Caco-2 (cell line): ENCODE measurements at regions of chr2 and their contacts with region 1.

Region 1: DNA sequence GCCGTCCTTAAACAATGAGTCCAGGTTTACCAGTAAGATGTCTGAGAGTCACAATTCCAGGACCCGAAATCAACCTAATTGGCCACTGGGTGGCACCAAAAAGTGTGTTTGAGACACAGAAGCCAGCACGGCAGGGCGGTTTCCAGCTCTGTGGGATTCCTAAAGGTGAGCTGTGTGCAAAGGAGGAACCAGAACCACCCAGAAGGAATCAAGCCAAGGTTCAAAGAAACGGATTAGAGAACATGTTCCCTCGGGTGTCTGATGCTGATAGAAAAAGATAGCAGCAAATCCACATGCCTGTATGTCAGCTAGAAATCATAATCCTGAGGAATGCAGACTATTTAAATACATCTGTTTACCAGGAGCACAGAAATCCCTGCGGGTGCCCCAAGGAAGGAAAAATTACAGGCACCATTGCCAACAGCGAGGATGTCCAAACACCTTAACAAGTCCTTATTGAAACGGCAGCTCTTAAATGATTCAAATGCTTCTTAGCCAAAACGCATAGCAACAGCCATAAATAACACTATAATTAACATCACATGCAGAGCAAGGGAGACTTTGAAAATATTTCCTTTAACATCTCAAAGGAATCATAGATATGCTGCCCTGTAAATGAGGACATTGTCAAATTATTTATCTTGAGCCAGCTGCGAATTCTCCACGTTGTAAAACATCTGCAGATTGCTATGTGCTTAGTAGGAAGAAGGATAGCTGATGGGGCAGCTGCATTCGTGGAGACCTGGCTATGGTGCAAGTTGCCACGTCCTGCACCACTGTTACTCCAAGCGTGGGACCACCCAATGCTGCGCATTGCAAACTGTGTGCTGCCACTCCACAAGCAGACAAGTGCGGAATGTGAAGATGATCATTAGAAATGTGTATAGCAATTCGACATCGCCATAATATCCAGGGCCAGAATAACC is 318.7 kb upstream of the NCKAP5 start:
- DNase-seq: peak; percentile 87
- H3K4me3 ChIP-seq: no peak overlapping the region
- H3K4me3 Mint-ChIP-seq: peak overlapping the region; percentile 25
- H3K27ac Mint-ChIP-seq: no peak overlapping the region
- H3K4me1 ChIP-seq: peaks cover 20% of the 10 kb centered on the region
- H3K4me1 Mint-ChIP-seq: peaks cover 25% of the 10 kb centered on the region
- H3K27me3 ChIP-seq: no peaks in the 10 kb centered on the region
- H3K27me3 Mint-ChIP-seq: no peaks in the 10 kb centered on the region
- CTCF ChIP-seq: peak; percentile 66 to 85

Region 2: GRCh38 chr2:133817680-133818579 is 69.1 kb before region 1 on chr2:
- CTCF ChIA-PET with region 1: no interaction called
- POLR2A ChIA-PET with region 1: no interaction called
- intact Hi-C with region 1: no loop called
- DNase-seq: peak; percentile 55 to 75
- H3K4me3 ChIP-seq: no peak overlapping the region
- H3K4me3 Mint-ChIP-seq: peak overlapping the region; percentile 44
- H3K27ac Mint-ChIP-seq: peak overlapping the region; percentile 60
- H3K4me1 ChIP-seq: peaks cover 10% of the 10 kb centered on the region
- H3K4me1 Mint-ChIP-seq: peaks cover 21% of the 10 kb centered on the region
- H3K27me3 ChIP-seq: no peaks in the 10 kb centered on the region
- H3K27me3 Mint-ChIP-seq: peaks cover 3% of the 10 kb centered on the region
- CTCF ChIP-seq: no peak

Region 3: GRCh38 chr2:133919285-133919684 is 32.3 kb after region 1 on chr2:
- CTCF ChIA-PET with region 1: no interaction called
- POLR2A ChIA-PET with region 1: no interaction called
- intact Hi-C with region 1: loop called (anchors 5 kb)
- DNase-seq: peak in 1 of 2 experiments; percentile 20
- H3K4me3 ChIP-seq: no peak overlapping the region
- H3K4me3 Mint-ChIP-seq: no peak overlapping the region
- H3K27ac Mint-ChIP-seq: no peak overlapping the region
- H3K4me1 ChIP-seq: no peaks in the 10 kb centered on the region; the same call in 1 of the 2 replicates
- H3K4me1 Mint-ChIP-seq: peaks cover 10% of the 10 kb centered on the region
- H3K27me3 ChIP-seq: no peaks in the 10 kb centered on the region
- H3K27me3 Mint-ChIP-seq: no peaks in the 10 kb centered on the region
- CTCF ChIP-seq: no peak

Region 4: DNA sequence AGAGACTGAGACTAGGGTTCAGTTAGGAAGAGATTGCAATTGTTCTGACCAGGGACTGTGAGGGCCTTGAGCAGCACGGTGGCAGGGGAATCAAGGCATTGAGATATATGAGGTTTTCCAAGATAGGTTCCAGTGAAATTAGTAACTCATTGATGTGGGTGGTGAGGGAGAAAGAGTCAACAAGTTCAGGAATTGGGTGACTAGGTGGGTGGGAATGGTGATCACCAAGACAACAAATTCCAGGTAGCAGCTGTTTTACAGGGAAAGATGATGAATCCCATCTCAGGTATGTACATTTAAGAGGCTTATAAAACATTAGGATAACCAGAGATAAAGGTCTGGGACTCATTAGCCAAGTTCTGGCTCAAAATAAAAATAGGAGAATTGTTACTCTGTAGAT is 115.4 kb after region 1 on chr2:
- CTCF ChIA-PET with region 1: no interaction called
- POLR2A ChIA-PET with region 1: no interaction called
- intact Hi-C with region 1: loop called (anchors 10 kb)
- DNase-seq: no peak
- H3K4me3 ChIP-seq: no peak overlapping the region
- H3K4me3 Mint-ChIP-seq: no peak overlapping the region
- H3K27ac Mint-ChIP-seq: no peak overlapping the region
- H3K4me1 ChIP-seq: no peaks in the 10 kb centered on the region
- H3K4me1 Mint-ChIP-seq: no peaks in the 10 kb centered on the region
- H3K27me3 ChIP-seq: no peaks in the 10 kb centered on the region
- H3K27me3 Mint-ChIP-seq: peaks cover 6% of the 10 kb centered on the region
- CTCF ChIP-seq: no peak

Region 5: GRCh38 chr2:134087371-134087921 is 200.4 kb after region 1 on chr2:
- CTCF ChIA-PET with region 1: interaction called, 3 read pairs
- POLR2A ChIA-PET with region 1: no interaction called
- intact Hi-C with region 1: loop called (anchors 10 kb)
- DNase-seq: peak; percentile 59 to 70
- H3K4me3 ChIP-seq: no peak overlapping the region
- H3K4me3 Mint-ChIP-seq: peak overlapping the region; percentile 12
- H3K27ac Mint-ChIP-seq: peak overlapping the region; percentile 75
- H3K4me1 ChIP-seq: peaks cover 28% of the 10 kb centered on the region
- H3K4me1 Mint-ChIP-seq: peaks cover 21% of the 10 kb centered on the region
- H3K27me3 ChIP-seq: no peaks in the 10 kb centered on the region
- H3K27me3 Mint-ChIP-seq: no peaks in the 10 kb centered on the region
- CTCF ChIP-seq: no peak

Region 6: GRCh38 chr2:134207564-134208209 is 320.7 kb after region 1 on chr2:
- CTCF ChIA-PET with region 1: interaction called, 4 read pairs
- POLR2A ChIA-PET with region 1: no interaction called
- intact Hi-C with region 1: loop called (anchors 5 kb)
- DNase-seq: peak; percentile 42 to 62
- H3K4me3 ChIP-seq: no peak overlapping the region
- H3K4me3 Mint-ChIP-seq: no peak overlapping the region
- H3K27ac Mint-ChIP-seq: no peak overlapping the region
- H3K4me1 ChIP-seq: peaks cover 2% of the 10 kb centered on the region; the same call in 1 of the 2 replicates
- H3K4me1 Mint-ChIP-seq: no peaks in the 10 kb centered on the region
- H3K27me3 ChIP-seq: no peaks in the 10 kb centered on the region
- H3K27me3 Mint-ChIP-seq: no peaks in the 10 kb centered on the region
- CTCF ChIP-seq: peak; percentile 67 to 78

Region 7: GRCh38 chr2:134411828-134412638 is 525.0 kb after region 1 on chr2:
- CTCF ChIA-PET with region 1: interaction called, 7 read pairs
- POLR2A ChIA-PET with region 1: no interaction called
- intact Hi-C with region 1: loop called (anchors 1 kb)
- DNase-seq: peak; percentile 76 to 84
- H3K4me3 ChIP-seq: no peak overlapping the region
- H3K4me3 Mint-ChIP-seq: no peak overlapping the region
- H3K27ac Mint-ChIP-seq: no peak overlapping the region
- H3K4me1 ChIP-seq: peaks cover 7% of the 10 kb centered on the region
- H3K4me1 Mint-ChIP-seq: peaks cover 12% of the 10 kb centered on the region
- H3K27me3 ChIP-seq: no peaks in the 10 kb centered on the region
- H3K27me3 Mint-ChIP-seq: no peaks in the 10 kb centered on the region
- CTCF ChIP-seq: peak; percentile 75 to 79